Ovary (tissue), 10 donors: ENCODE measurements at regions of chr10 and their contacts with region 1.

Region 1: GRCh38 chr10:23217471-23217870 is 25.4 kb downstream of the PTF1A start:
- DNase-seq: no peak
- H3K4me3 ChIP-seq: no peak overlapping the region
- H3K27ac ChIP-seq: no peak overlapping the region
- H3K4me1 ChIP-seq: no peaks in the 10 kb centered on the region
- H3K27me3 ChIP-seq: no peaks in the 10 kb centered on the region
- CTCF ChIP-seq: no peak
- EP300 ChIP-seq: no peak
- POLR2A ChIP-seq: no peak

Region 2: GRCh38 chr10:22925088-22925487 is 292.4 kb before region 1 on chr10:
- intact Hi-C with region 1: no loop called
- DNase-seq: no peak
- H3K4me3 ChIP-seq: no peak overlapping the region
- H3K27ac ChIP-seq: no peak overlapping the region
- H3K4me1 ChIP-seq: no peaks in the 10 kb centered on the region
- H3K27me3 ChIP-seq: no peaks in the 10 kb centered on the region
- CTCF ChIP-seq: no peak
- EP300 ChIP-seq: no peak
- POLR2A ChIP-seq: no peak

Region 3: GRCh38 chr10:23656735-23657134 is 439.3 kb after region 1 on chr10:
- intact Hi-C with region 1: loop called in 1 of 4 experiments (anchors 5 kb)
- DNase-seq: no peak
- H3K4me3 ChIP-seq: no peak overlapping the region
- H3K27ac ChIP-seq: no peak overlapping the region
- H3K4me1 ChIP-seq: no peaks in the 10 kb centered on the region
- H3K27me3 ChIP-seq: no peaks in the 10 kb centered on the region
- CTCF ChIP-seq: no peak
- EP300 ChIP-seq: no peak
- POLR2A ChIP-seq: no peak